Activated T-helper 1 cell treated with anti-CD3 and anti-CD28 coated beads, Interleukin-12 subunit alpha, Interleukin-12 subunit beta, Interleukin-2, Interleukin-4 antibody, amounts not matched to agents 30 ng/mL and 10 ng/mL and 1 ng/mL, durations not matched to agents 14 hours and 24 hours and 36 hours (primary cell): ENCODE measurements at regions of chr16 and their contacts with region 1.

Region 1: DNA sequence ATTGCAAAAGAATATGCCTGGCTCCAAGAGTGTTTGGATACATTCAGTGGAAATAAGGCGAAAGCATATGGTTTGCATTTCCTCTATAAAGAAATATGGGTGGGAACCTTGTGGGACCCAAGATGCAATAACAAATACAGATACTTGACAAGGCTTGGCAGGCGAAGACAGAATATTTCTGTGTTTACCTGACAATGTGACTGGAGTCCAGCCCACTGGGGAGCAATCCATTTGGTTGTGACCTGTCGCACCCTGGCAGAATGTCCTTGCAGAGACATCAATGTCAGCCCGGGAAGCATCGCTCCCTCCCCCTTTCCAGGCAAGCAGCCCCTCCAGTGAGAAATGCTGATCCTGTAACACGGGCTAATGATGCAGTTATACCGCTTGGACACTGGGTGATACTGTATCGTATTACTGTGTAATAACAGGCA is 296.6 kb downstream of the MAF start:
- DNase-seq: no peak
- H3K4me3 Mint-ChIP-seq: no peak overlapping the region
- H3K27ac Mint-ChIP-seq: no peak overlapping the region
- H3K4me1 Mint-ChIP-seq: no peaks in the 10 kb centered on the region
- H3K27me3 Mint-ChIP-seq: peaks cover 11% of the 10 kb centered on the region

Region 2: GRCh38 chr16:79286646-79287423 is 17.1 kb before region 1 on chr16:
- intact Hi-C with region 1: loop called (anchors 1 kb)
- DNase-seq: no peak
- H3K4me3 Mint-ChIP-seq: peak overlapping the region; percentile 51
- H3K27ac Mint-ChIP-seq: peak overlapping the region; percentile 77
- H3K4me1 Mint-ChIP-seq: peaks cover 56% of the 10 kb centered on the region
- H3K27me3 Mint-ChIP-seq: peaks cover 8% of the 10 kb centered on the region

Region 3: DNA sequence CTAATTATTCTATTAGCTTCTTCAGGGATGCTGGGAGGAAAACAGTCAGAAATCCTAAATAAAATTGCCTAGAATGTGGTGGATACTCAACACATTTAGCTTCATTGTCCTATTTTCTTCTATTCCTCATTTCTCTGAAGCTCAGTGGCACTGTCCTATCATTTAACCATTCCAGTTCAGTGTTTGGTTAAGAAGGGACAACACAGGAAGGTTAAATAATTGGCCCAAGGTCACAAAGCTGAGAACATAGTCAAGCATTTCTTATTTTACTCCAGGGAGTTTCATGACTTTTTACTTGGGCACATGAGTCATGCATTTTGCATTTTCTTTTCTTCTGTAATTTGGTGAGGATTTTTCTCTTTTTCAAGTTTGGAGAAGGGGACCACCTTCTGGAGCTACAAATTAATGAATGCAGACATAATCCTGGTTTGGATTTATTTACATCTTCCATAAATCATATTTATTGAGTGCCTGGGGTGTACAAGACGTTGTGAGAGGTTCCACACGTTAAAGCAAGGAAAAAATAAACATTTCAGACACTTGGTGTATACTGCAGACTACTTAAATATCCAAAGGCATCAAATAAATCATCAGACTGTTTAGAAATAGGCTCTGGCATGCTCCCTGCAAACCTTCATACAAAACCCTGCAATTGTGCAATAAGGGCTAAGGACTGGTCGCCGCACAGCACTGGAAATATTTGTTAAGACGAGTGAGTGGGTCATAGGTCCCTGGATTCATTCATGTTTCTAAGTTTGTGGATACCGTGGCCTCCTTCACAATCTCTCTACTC is 32.7 kb after region 1 on chr16:
- intact Hi-C with region 1: no loop called
- DNase-seq: no peak
- H3K4me3 Mint-ChIP-seq: no peak overlapping the region
- H3K27ac Mint-ChIP-seq: no peak overlapping the region
- H3K4me1 Mint-ChIP-seq: no peaks in the 10 kb centered on the region
- H3K27me3 Mint-ChIP-seq: peaks cover 5% of the 10 kb centered on the region

Region 4: GRCh38 chr16:79417601-79418008 is 113.6 kb after region 1 on chr16:
- intact Hi-C with region 1: no loop called
- DNase-seq: no peak
- H3K4me3 Mint-ChIP-seq: no peak overlapping the region
- H3K27ac Mint-ChIP-seq: no peak overlapping the region
- H3K4me1 Mint-ChIP-seq: peaks cover 16% of the 10 kb centered on the region
- H3K27me3 Mint-ChIP-seq: peaks cover 6% of the 10 kb centered on the region

Region 5: DNA sequence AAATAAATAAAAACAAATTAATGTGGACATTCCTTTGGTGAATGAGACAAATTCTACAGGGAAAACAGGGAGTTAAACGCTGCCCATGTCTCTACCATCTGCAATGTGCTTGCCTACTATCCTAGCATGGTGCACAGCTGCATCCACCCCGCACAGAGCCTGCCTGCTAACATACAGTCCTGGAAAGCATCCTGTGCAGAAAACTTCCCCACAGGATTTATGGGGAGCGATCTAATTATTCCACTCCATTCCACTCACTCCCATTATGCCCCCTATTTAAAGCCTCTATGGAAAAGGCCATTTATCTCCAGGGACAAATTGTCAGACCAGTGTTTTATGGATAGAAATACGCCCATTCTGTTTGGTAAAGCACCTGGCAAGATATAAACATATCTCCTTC is 152.1 kb after region 1 on chr16:
- intact Hi-C with region 1: no loop called
- DNase-seq: no peak
- H3K4me3 Mint-ChIP-seq: no peak overlapping the region
- H3K27ac Mint-ChIP-seq: no peak overlapping the region
- H3K4me1 Mint-ChIP-seq: peaks cover 4% of the 10 kb centered on the region
- H3K27me3 Mint-ChIP-seq: peaks cover 12% of the 10 kb centered on the region